ENCODE measurements at regions of chr1 and their contacts with region 1.

Region 1: DNA sequence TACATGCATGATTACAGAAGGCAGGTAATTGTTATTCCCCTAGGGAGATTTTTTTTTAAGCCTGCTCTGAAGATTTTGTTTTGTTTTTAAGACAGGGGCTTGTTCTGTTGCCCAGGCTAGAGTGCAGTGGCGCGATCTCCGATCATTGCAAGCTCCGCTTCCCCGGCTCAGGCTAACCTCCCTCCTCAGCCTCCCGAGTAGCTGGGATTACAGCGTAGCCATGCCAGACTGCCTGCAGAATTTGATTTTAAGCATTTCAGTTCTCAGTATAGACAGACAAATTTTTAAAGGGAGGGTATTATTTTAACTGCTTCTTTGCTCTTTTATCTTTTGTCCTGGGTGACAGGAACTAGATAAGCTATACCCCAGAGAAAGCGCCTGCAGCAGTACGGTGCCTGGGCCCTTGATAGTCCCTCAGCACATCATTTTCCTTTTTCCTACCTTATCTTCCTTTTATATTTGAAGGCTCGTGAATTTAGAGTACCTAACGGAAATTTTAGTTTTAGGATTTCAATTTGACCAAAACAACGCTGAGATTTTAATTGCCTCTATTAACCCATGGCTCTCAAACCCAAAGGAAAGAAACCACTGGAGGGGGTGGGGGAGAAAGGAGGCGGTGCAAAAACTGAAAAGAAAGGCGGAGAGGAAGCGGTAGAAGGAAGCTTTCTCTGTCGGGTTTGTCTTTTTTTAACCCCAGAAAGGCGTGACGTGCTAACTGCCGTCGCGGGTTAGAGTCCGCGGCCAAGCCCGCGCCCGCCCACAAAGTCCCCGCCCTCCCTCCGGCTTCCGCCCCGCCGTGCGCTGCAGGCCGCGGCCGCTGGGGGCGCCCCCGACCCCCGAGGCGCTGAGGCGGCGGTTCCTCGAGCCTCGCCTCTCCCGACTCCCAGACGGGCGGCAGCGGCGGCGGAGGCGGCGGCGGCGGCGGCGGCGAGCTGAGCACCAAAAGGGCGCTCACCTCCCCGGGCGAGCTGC is at the start of gene EEIG2:
- DNase-seq: no peak
- H3K4me3 ChIP-seq: peak within 1 kb of the TSS; percentile 70
- CTCF ChIP-seq: peak; percentile 69

Region 2: DNA sequence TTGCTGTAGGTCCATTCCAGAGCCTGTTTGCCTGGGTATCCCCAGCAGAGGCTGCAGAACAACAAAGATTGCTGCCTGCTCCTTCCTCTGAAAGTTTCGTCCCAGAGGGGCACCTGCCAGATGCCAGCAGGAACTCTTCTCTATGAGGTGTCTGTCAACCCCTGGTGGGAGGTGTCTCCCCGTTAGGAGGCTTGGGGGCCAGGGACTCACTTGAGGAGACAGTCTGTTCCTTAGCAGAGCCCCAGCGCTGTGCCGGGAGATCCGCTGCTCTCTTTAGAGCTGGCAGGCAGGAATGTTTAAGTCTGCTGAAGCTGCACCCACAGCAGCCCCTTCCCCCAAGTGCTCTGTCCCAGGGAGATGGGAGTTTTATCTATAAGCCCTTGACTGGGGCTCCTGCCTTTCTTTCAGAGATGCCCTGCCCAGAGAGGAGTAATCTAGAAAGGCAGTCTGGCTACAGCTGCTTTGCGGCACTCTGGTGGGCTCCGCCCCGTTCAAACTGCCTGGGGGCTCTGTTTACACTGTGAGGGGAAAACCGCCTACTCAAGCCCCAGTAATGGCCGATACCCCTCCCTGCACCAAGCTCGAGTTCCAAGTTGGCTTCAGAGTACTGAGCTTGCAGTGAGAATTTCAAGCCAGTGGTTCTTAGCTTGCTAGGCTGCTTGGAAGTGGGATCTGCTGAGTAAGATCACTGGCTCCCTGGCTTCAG is 350.6 kb before region 1 on chr1:
- CTCF ChIA-PET with region 1: no interaction called
- POLR2A ChIA-PET with region 1: no interaction called
- DNase-seq: no peak
- H3K4me3 ChIP-seq: no peak overlapping the region
- CTCF ChIP-seq: no peak

Region 3: GRCh38 chr1:108512239-108512981 is 47.1 kb before region 1 on chr1:
- CTCF ChIA-PET with region 1: interaction called, 21 read pairs
- POLR2A ChIA-PET with region 1: no interaction called
- DNase-seq: no peak
- H3K4me3 ChIP-seq: no peak overlapping the region
- CTCF ChIP-seq: peak; percentile 63

Region 4: DNA sequence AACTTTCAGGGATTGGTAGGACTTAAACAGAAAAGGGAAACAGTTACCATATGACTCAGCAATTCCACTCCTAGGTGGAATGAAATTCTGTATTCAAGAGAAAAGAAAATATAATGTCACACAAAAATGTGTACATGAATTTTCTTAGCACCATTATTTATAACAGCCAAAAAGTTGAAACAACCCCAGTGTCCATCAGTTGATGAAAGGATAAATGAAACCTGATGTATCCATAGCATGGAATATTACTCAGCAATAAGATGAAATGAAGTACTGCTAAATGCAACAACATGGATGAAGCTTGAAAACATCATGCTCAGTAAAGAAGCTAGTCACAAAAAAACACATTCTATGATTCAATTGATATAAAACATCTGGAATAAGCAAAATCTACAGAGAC is 15.9 kb after region 1 on chr1:
- CTCF ChIA-PET with region 1: interaction called, 31 read pairs
- POLR2A ChIA-PET with region 1: no interaction called
- DNase-seq: no peak
- H3K4me3 ChIP-seq: no peak overlapping the region
- CTCF ChIP-seq: no peak

Region 5: DNA sequence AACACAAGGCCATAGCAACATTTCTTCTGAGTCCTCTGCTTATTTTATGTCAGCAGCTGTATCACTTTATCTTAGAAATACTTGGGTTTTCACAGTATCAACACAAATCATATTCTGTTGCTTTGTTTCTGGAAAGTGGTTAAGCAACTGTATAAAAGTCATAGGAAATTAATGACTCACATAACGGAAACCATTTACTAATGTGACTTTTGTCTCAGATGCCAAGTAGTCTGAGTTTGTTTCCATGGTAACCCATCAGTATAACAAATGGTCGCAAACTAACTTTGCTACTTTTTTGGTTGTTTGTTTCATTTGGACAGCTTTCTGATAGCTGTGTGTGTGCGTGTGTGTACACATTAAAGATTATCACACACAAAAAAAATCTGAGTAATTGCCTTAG is 31.5 kb after region 1 on chr1:
- CTCF ChIA-PET with region 1: interaction called, 26 read pairs
- POLR2A ChIA-PET with region 1: no interaction called
- DNase-seq: peak; percentile 72
- H3K4me3 ChIP-seq: no peak overlapping the region
- CTCF ChIP-seq: no peak

Region 6: GRCh38 chr1:108643492-108644335 is 84.2 kb after region 1 on chr1:
- CTCF ChIA-PET with region 1: interaction called, 26 read pairs
- POLR2A ChIA-PET with region 1: no interaction called
- DNase-seq: peak; percentile 37
- H3K4me3 ChIP-seq: no peak overlapping the region
- CTCF ChIP-seq: peak; percentile 46

Region 7: DNA sequence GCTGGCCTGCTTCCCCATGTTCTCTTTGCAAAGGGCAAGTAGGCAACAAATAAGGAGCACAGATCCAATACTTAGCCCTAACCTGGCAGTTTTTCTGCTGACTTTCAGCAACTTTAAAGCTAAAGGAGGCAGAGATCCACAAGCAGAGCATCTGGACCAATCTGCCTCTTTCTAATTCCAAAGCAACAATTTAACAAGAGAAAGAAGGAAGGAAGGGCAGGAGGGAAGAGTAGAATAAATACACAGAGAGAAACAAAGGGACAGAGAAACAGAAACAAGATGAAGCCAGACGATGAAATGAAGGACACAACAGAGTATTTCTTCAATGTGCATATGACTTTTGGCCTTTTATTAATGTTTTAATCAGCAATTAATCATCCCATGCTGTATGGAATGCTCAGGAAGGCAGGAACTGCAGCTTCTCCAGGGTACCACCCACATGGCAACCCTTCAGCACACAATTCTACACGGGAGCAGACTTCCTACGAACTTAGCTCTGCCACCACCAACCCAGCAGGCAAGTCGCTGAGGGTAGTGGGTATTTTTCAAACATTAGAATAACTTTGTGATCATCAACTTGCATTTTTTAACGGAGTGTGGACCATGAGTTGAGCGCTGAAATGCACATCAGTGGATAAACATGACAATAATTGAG is 388.5 kb after region 1 on chr1:
- CTCF ChIA-PET with region 1: no interaction called
- POLR2A ChIA-PET with region 1: no interaction called
- DNase-seq: no peak
- H3K4me3 ChIP-seq: no peak overlapping the region
- CTCF ChIP-seq: no peak